Activated CD4-positive, alpha-beta memory T cell treated with anti-CD3 and anti-CD28 coated beads for 36 hours (primary cell): ENCODE measurements at regions of chr17 and their contacts with region 1.

Region 1: GRCh38 chr17:74430706-74431567 is 951 bp upstream of the GPRC5C start:
- DNase-seq: peak; percentile 54
- H3K4me3 Mint-ChIP-seq: peak overlapping the region; percentile 46
- H3K27ac Mint-ChIP-seq: no peak overlapping the region
- H3K4me1 Mint-ChIP-seq: peaks cover 12% of the 10 kb centered on the region
- H3K27me3 Mint-ChIP-seq: peaks cover 38% of the 10 kb centered on the region

Region 2: DNA sequence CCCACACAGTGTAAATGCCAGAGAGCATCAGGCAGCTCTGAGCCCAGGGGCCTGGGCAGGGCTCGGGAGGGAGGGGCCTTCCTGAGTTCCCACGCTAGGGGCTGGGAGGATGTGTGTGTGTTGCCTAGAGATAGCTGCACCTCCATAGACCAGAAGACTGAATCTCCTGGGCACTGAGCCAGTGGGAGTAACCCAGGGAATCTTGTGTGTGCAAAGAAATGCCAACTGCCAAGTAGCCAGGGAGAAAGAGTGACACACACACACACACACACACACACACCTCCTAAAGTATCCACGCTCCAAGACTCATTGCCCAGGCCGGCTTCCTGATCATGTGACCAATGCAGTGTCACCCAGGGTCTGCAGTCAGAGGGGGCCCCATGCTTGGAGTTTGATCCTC is 393.6 kb before region 1 on chr17:
- CTCF ChIA-PET with region 1: no interaction called
- POLR2A ChIA-PET with region 1: no interaction called
- intact Hi-C with region 1: no loop called
- DNase-seq: no peak
- H3K4me3 Mint-ChIP-seq: no peak overlapping the region
- H3K27ac Mint-ChIP-seq: no peak overlapping the region
- H3K4me1 Mint-ChIP-seq: no peaks in the 10 kb centered on the region
- H3K27me3 Mint-ChIP-seq: no peaks in the 10 kb centered on the region

Region 3: DNA sequence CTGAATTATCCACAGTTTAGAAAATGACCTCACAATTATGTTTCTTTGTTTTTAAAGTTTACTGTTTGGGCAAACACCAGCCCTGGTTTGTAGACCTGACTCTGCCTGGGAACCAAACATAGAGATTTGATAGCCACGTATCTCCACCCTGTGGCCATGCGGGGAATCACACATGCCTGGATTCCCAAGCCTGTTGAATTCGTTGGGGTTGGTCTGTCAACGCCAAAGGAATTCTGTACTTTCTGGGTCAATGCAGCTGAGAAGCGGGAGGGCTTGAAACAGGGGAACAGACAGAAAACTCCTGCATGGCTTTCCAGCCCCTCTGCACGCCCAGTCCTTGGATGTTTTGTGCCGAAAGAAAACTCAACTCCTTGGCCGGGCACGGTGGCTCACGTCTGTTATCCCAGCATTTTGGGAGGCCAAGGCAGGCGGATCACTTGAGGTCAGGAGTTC is 62.5 kb after region 1 on chr17:
- CTCF ChIA-PET with region 1: no interaction called
- POLR2A ChIA-PET with region 1: no interaction called
- intact Hi-C with region 1: loop called (anchors 10 kb)
- DNase-seq: peak; percentile 80
- H3K4me3 Mint-ChIP-seq: no peak overlapping the region
- H3K27ac Mint-ChIP-seq: no peak overlapping the region
- H3K4me1 Mint-ChIP-seq: peaks cover 2% of the 10 kb centered on the region
- H3K27me3 Mint-ChIP-seq: peaks cover 2% of the 10 kb centered on the region